ENCODE measurements at regions of chr6 and their contacts with region 1.

Region 1: DNA sequence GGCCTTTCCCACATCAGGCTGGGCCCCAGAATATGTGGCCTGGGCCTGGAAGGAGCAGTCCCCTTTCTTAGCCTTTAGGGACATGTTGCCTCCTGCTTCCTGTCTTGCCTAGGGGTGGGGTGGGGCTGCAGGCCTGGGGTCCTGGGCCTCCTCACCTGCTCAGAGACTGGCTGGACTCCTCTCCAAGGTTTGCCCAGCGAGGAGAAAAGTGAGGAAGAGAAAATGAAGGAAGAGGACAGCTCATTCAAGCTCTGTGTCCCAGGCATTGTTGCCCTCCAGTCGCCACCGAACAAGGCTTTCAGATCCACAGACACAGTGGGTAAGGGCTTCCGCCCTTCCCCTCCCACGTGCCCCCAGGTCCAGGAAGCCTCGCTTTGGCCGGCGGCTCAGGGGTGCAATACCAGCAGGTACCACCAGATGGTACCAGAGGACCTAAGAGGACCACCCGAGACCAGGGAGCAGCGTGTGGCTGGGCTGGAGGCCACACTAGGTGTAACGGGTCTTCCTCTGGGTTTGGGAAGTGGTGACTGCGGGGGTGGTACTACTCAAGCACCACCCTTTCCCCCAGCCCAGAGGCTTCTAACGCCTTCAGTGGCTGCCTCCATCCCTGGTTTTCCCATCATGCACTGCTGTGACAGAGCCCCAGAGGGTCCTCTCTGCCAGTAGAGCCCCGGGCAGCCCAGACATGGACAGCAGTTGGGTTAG is 5.5 kb upstream of the BAK1 start:
- DNase-seq: peak; percentile 89
- H3K4me3 ChIP-seq: peak overlapping the region in 1 of 4 donors; percentile 6
- H3K27ac ChIP-seq: no peak overlapping the region
- H3K4me1 ChIP-seq: peaks cover 0 to 20% (median 11%) of the 10 kb centered on the region in 4 donors
- H3K27me3 ChIP-seq: no peaks in the 10 kb centered on the region
- CTCF ChIP-seq: peak; percentile 93 to 99 (median 96)
- EP300 ChIP-seq: no peak
- POLR2A ChIP-seq: no peak

Region 2: GRCh38 chr6:33126101-33126714 is 459.3 kb before region 1 on chr6:
- intact Hi-C with region 1: no loop called
- DNase-seq: peak; percentile 71
- H3K4me3 ChIP-seq: no peak overlapping the region
- H3K27ac ChIP-seq: no peak overlapping the region
- H3K4me1 ChIP-seq: no peaks in the 10 kb centered on the region
- H3K27me3 ChIP-seq: no peaks in the 10 kb centered on the region
- CTCF ChIP-seq: peak in 3 of 4 experiments; percentile 30 to 55 (median 32)
- EP300 ChIP-seq: no peak
- POLR2A ChIP-seq: no peak

Region 3: GRCh38 chr6:33700391-33701050 is 115.0 kb after region 1 on chr6:
- intact Hi-C with region 1: loop called (anchors 1 kb)
- DNase-seq: peak; percentile 70
- H3K4me3 ChIP-seq: no peak overlapping the region
- H3K27ac ChIP-seq: no peak overlapping the region
- H3K4me1 ChIP-seq: peaks cover 0 to 26% (median 15%) of the 10 kb centered on the region in 4 donors
- H3K27me3 ChIP-seq: no peaks in the 10 kb centered on the region
- CTCF ChIP-seq: peak in 3 of 4 experiments; percentile 16 to 33 (median 30)
- EP300 ChIP-seq: no peak
- POLR2A ChIP-seq: no peak

Region 4: DNA sequence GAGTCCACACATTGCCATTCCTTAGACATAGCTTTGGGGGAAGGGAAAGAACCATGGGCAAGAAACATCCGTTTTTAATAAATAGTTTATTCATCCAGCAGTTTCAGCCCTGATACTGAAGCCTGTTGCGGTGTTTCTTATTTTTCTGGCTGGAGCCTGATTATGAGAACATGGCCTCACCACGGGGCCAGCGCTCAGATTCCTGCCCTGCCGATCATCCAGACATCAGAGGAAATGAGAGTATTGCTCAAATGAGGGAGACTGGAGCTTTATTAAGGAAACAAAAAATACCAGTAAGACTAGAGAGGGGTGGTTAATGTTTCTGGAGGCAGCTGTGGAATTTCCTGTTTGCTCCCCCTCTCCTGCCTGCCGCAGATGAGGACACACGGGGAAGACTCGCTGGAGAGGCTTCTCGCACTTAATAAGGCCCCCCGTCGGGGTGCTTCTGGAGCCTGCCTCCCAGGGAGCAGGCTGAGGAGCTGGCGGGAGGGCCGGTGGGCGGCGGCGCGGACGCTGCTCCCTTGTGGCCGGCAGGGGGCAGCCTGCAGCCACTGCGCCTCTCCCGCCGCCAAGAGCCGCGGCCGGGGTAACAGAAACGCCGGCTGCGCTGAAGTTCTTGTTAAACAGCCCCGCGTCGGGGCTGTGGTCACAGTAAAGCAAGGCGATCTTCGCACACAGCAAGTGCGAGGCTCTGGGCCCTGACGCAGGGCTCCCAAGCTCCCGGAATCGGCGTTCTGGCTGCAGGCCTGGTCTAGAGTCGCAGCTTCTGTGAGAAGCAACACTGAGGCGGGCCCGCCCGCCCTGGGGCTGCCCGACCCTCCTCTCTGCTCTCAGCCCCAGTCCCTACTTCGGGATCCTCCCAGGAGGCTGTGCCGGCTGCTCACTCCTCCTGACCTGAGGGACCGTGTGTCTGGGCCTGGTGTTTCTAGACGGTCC is 185.9 kb after region 1 on chr6:
- intact Hi-C with region 1: no loop called
- DNase-seq: peak; percentile 89
- H3K4me3 ChIP-seq: peak overlapping the region in 1 of 4 donors; percentile 9
- H3K27ac ChIP-seq: peak overlapping the region; percentile 43 to 75 (median 67)
- H3K4me1 ChIP-seq: peaks cover 0 to 43% (median 36%) of the 10 kb centered on the region in 4 donors
- H3K27me3 ChIP-seq: peaks cover 0 to 9% (median 0%) of the 10 kb centered on the region in 3 donors
- CTCF ChIP-seq: peak; percentile 82 to 97 (median 87)
- EP300 ChIP-seq: no peak
- POLR2A ChIP-seq: no peak

Measured in sigmoid colon (tissue), 7 donors.